Esophagus muscularis mucosa (tissue), 4 donors: ENCODE measurements at regions of chr18 and their contacts with region 1.

Region 1: DNA sequence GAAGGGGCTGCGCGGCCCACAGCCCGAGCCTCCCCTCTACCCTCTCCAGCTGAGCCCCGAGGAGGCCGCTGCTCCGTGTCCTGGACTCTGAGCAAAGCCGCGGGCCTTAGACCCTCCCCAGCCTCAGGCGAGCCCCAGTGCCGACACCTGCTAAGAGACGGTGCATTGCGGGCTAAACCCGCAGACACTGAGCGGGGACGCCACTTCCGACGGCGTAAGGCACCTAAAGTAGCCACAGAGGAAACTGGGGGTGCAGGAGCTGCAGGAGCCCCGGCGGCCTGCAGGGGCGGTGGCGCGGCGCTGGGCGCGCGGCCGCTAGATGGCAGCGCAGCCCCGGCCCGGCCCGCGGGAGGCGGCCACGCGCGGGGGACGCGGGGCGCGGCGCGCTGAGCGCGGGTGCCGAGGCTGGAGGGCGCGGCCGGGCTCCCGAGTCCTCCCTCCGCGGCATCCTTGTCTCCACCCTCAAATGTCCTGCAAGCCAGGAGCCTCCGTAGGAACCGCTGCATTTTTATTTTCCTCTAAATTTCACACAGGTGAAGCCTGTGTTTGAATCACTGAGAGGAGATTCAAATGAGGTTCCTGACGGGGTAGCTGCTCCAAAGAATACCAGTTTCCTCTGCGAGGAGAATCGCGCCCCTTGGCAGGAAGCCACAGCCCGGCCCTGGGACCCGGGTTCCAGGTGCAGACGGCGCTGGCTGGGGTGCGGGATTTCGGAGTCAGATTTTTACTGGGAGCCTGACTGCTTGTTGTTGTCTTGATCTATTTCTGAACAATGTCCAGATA is 650.5 kb downstream of the GALR1 start:
- DNase-seq: no peak
- H3K4me3 ChIP-seq: peak overlapping the region; percentile 29 to 55 (median 39)
- H3K27ac ChIP-seq: no peak overlapping the region
- H3K4me1 ChIP-seq: peaks cover 3 to 11% (median 7%) of the 10 kb centered on the region in 4 donors
- H3K27me3 ChIP-seq: peaks cover 0 to 30% (median 2%) of the 10 kb centered on the region in 4 donors
- CTCF ChIP-seq: peak; percentile 56 to 77 (median 62)
- EP300 ChIP-seq: no peak
- POLR2A ChIP-seq: no peak

Region 2: DNA sequence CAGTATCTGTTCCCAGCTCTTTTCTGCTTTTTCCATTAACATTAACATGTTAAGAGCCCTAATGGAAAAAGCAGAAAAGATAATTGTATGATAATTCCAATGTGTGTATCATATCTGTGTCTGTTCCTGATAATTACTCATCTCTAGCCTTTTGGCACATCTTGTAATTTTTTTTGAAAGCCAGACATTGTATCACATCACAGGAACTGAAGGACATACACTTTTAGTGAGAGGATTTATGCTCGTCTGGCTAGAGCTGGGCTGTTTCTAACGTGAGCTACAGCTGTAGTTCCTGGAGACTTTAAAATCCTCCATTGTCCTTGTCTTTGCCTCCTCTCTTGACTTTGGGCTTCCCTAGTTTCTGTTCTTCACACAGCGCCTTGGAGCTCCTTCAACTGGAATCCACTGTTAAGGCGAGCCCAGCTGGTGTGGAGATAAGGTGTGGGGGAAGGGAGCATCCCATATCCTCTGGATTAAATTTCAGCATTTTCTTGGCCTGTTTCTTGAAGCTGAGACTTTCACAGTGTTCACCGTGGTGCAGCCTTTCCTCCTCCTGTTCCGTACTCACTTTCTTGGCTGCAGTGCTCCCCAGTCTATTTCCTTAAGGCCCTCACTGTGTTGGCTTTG is 439.0 kb before region 1 on chr18:
- intact Hi-C with region 1: no loop called
- DNase-seq: no peak
- H3K4me3 ChIP-seq: no peak overlapping the region
- H3K27ac ChIP-seq: no peak overlapping the region
- H3K4me1 ChIP-seq: peaks cover 0 to 14% (median 3%) of the 10 kb centered on the region in 4 donors
- H3K27me3 ChIP-seq: no peaks in the 10 kb centered on the region
- CTCF ChIP-seq: no peak
- EP300 ChIP-seq: no peak
- POLR2A ChIP-seq: no peak

Region 3: DNA sequence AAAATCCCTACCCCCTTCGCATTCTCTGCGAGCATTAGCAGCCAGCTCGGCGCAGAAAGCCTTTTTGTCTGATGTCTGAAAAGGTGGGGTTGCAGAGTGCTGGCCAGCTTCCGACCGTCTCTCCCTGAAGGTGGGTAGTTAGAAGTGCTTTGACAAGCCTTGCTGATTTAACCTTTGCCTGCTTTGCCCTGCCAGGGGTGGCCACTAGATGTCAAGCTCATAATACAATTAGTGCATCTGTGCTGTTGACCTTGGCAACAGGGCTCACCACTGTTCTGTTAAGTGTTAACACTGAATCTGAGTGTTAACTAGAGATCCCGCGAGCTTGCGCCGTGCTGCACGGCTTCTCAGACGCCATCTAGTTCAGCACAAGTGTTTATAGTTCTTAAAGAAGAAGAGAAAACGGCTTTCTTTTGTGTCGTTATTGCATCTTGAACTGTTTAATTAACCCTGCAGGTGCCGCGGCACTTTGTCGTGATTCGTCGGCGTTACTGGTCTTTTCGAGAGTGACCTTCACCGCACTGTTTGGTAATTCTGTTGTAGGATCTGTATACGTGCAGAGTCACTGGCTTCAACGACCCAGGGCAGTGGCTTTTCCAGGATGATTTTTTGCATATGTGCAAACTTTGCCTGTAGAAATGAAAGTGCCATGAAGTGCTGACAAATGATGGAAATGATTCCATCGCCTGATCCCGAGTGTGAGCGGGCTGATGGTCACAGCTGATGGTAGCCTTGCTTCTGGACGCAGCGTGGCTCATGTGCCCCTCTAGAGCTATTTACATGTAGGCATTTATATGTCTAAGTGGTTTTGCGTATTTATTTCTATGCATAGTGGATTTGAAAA is 1085.0 kb after region 1 on chr18:
- intact Hi-C with region 1: loop called (anchors 10 kb)
- DNase-seq: no peak
- H3K4me3 ChIP-seq: no peak overlapping the region
- H3K27ac ChIP-seq: no peak overlapping the region
- H3K4me1 ChIP-seq: peaks cover 7 to 26% (median 18%) of the 10 kb centered on the region in 4 donors
- H3K27me3 ChIP-seq: peaks cover 0 to 87% (median 55%) of the 10 kb centered on the region in 4 donors
- CTCF ChIP-seq: no peak
- EP300 ChIP-seq: no peak
- POLR2A ChIP-seq: no peak